GM12878 (cell line): ENCODE measurements at regions of chr15 and their contacts with region 1.

Region 1: DNA sequence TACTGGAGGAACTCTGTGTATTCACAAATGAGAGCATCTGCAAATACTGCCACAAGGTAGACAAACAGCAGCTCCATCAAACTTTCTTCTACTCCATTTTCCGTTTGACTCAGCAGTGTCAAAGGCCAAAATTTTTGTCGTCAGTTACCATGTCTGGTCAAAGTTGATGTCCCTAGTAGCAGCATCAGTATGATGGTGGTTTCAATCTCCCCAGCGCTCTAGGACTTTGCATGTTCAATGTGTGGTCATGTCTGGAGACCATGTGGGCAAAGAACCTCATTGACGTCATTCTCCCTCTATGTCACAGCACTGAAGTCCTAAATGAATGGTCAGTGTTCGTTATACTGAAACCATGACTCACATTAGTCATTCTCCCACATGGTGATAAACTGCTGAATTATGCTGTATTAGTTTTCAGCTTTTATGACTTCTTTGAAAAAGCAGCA is 23.2 kb downstream of the SHC4 start:
- DNase-seq: peak; percentile 81
- ATAC-seq: peak; percentile 95
- H3K4me3 ChIP-seq: no peak overlapping the region
- H3K27ac ChIP-seq: no peak overlapping the region
- H3K4me1 ChIP-seq: peaks cover 3% of the 10 kb centered on the region; the same call in 1 of the 2 replicates
- H3K27me3 ChIP-seq: no peaks in the 10 kb centered on the region
- CTCF ChIP-seq: no peak
- EP300 ChIP-seq: peak; percentile 95 to 98
- POLR2A ChIP-seq: no peak
- RAD21 ChIP-seq: no peak

Region 2: DNA sequence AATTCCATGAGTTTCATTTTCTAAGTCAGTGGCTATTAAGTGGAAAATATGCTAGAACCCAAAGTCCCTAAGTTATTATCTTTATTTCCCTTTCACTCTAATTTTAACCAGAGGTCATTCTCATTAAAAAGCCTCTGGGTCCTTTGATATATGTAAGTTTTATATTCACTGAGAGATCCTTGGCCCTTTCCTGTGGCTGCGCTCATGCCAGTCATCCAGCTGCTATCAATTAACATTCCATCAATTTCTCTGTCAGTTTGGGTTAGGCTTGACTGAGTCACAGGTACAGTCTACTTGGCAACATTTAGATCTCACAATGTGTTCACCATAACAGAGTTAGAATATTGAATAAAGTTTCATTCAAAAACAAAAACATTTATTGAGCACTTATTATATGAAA is 236.9 kb before region 1 on chr15:
- CTCF ChIA-PET with region 1: no interaction called
- POLR2A ChIA-PET with region 1: no interaction called
- RAD21 ChIA-PET with region 1: no interaction called
- SMC1A ChIA-PET with region 1: no interaction called
- in situ Hi-C with region 1: no loop called
- intact Hi-C with region 1: no loop called
- DNase-seq: no peak
- ATAC-seq: no peak
- H3K4me3 ChIP-seq: no peak overlapping the region
- H3K27ac ChIP-seq: no peak overlapping the region
- H3K4me1 ChIP-seq: no peaks in the 10 kb centered on the region; the same call in 1 of the 2 replicates
- H3K27me3 ChIP-seq: no peaks in the 10 kb centered on the region
- CTCF ChIP-seq: no peak
- EP300 ChIP-seq: no peak
- POLR2A ChIP-seq: no peak
- RAD21 ChIP-seq: no peak

Region 3: GRCh38 chr15:48814286-48814685 is 126.2 kb before region 1 on chr15:
- CTCF ChIA-PET with region 1: no interaction called
- POLR2A ChIA-PET with region 1: no interaction called
- RAD21 ChIA-PET with region 1: no interaction called
- SMC1A ChIA-PET with region 1: no interaction called
- in situ Hi-C with region 1: no loop called
- intact Hi-C with region 1: no loop called
- DNase-seq: no peak
- ATAC-seq: no peak
- H3K4me3 ChIP-seq: no peak overlapping the region
- H3K27ac ChIP-seq: no peak overlapping the region
- H3K4me1 ChIP-seq: 0 out of 2 replicates have a peak, but pooled peaks cover 2% of the 10 kb centered on the region
- H3K27me3 ChIP-seq: no peaks in the 10 kb centered on the region; a peak in 1 of 4 replicates
- CTCF ChIP-seq: no peak
- EP300 ChIP-seq: no peak
- POLR2A ChIP-seq: no peak
- RAD21 ChIP-seq: no peak

Region 4: GRCh38 chr15:48877630-48878595 is 62.6 kb before region 1 on chr15 and contains the start of gene EID1:
- CTCF ChIA-PET with region 1: interaction called, 5 read pairs
- POLR2A ChIA-PET with region 1: interaction called, 3 read pairs
- RAD21 ChIA-PET with region 1: interaction called, 3 read pairs
- SMC1A ChIA-PET with region 1: interaction called, 19 read pairs
- in situ Hi-C with region 1: no loop called
- intact Hi-C with region 1: loop called (anchors 2 kb)
- DNase-seq: peak; percentile 87
- ATAC-seq: peak; percentile 94
- H3K4me3 ChIP-seq: peak within 1 kb of the TSS; percentile 67
- H3K27ac ChIP-seq: peak within 1 kb of the TSS; percentile 85
- H3K4me1 ChIP-seq: peaks cover 4% of the 10 kb centered on the region
- H3K27me3 ChIP-seq: no peaks in the 10 kb centered on the region
- CTCF ChIP-seq: no peak
- EP300 ChIP-seq: peak in 1 of 2 experiments; percentile 40; a peak in 1 of 4 replicates
- POLR2A ChIP-seq: peak; percentile 98
- RAD21 ChIP-seq: no peak
- polyA plus RNA-seq, gene EID1: 45.6 to 79.5 TPM

Region 5: GRCh38 chr15:48925714-48926223 is 14.7 kb before region 1 on chr15:
- CTCF ChIA-PET with region 1: interaction called, 3 read pairs
- POLR2A ChIA-PET with region 1: no interaction called
- RAD21 ChIA-PET with region 1: interaction called, 3 read pairs
- SMC1A ChIA-PET with region 1: interaction called, 13 read pairs
- in situ Hi-C with region 1: no loop called
- intact Hi-C with region 1: no loop called
- DNase-seq: no peak
- ATAC-seq: no peak
- H3K4me3 ChIP-seq: no peak overlapping the region
- H3K27ac ChIP-seq: no peak overlapping the region
- H3K4me1 ChIP-seq: no peaks in the 10 kb centered on the region
- H3K27me3 ChIP-seq: no peaks in the 10 kb centered on the region
- CTCF ChIP-seq: no peak
- EP300 ChIP-seq: no peak
- POLR2A ChIP-seq: no peak
- RAD21 ChIP-seq: no peak

Region 6: GRCh38 chr15:48992545-48992944 is 52.1 kb after region 1 on chr15:
- CTCF ChIA-PET with region 1: no interaction called
- POLR2A ChIA-PET with region 1: no interaction called
- RAD21 ChIA-PET with region 1: no interaction called
- SMC1A ChIA-PET with region 1: no interaction called
- in situ Hi-C with region 1: no loop called
- intact Hi-C with region 1: no loop called
- DNase-seq: peak; percentile 17
- ATAC-seq: peak; percentile 99
- H3K4me3 ChIP-seq: no peak overlapping the region
- H3K27ac ChIP-seq: no peak overlapping the region
- H3K4me1 ChIP-seq: peaks cover 3% of the 10 kb centered on the region; the same call in 1 of the 2 replicates
- H3K27me3 ChIP-seq: no peaks in the 10 kb centered on the region
- CTCF ChIP-seq: no peak
- EP300 ChIP-seq: no peak; a peak in 1 of 4 replicates
- POLR2A ChIP-seq: no peak
- RAD21 ChIP-seq: 0 out of 2 replicates have a peak, but pooled peaks have one; percentile 4

Region 7: GRCh38 chr15:49452595-49452994 is 512.1 kb after region 1 on chr15:
- CTCF ChIA-PET with region 1: no interaction called
- POLR2A ChIA-PET with region 1: no interaction called
- RAD21 ChIA-PET with region 1: no interaction called
- SMC1A ChIA-PET with region 1: no interaction called
- in situ Hi-C with region 1: no loop called
- intact Hi-C with region 1: no loop called
- DNase-seq: no peak
- ATAC-seq: no peak
- H3K4me3 ChIP-seq: no peak overlapping the region
- H3K27ac ChIP-seq: no peak overlapping the region
- H3K4me1 ChIP-seq: no peaks in the 10 kb centered on the region
- H3K27me3 ChIP-seq: no peaks in the 10 kb centered on the region; a peak in 1 of 4 replicates
- CTCF ChIP-seq: no peak
- EP300 ChIP-seq: no peak
- POLR2A ChIP-seq: no peak
- RAD21 ChIP-seq: no peak